ENCODE measurements at regions of chr2 and their contacts with region 1.

Region 1: DNA sequence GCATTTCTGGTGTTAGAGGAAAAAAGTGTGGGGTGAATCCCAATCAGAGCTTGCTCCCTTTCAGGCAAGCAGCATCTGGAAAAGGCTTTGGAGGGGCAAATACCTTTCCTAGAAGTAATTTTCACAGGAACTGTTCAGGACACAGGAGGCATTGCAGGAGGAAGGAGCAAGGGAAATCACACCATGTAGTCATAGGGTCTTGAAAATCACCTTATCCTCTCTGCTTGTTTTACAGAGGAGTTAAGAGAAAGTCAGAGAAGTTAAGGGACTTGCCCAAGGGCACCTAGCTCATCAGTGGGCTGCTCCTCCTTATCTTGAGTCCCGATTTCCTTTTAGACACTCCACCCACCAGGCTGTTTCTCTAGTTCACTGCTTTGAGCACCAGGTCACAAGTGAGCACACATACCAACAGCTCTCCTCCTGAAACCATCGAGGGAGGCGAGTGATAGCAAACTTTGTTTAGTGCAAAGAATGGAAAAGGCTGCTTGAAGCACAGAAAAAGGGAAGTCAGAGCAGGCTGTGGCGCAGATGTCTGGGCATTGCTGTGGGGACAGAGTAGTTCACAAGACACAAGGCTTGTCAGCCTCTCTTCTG is 89.2 kb upstream of the CXCR4 start:
- DNase-seq: peak; percentile 94
- ATAC-seq: peak; percentile 65
- H3K4me3 ChIP-seq: peak overlapping the region in 4 of 5 experiments; percentile 1 to 44 (median 26)
- H3K4me3 Mint-ChIP-seq: peak overlapping the region; percentile 84
- H3K27ac ChIP-seq: peak overlapping the region; percentile 98 to 99
- H3K27ac Mint-ChIP-seq: peak overlapping the region; percentile 99
- H3K4me1 ChIP-seq: peaks cover 70 to 74% of the 10 kb centered on the region in 2 donors
- H3K4me1 Mint-ChIP-seq: peaks cover 77% of the 10 kb centered on the region
- H3K27me3 ChIP-seq: no peaks in the 10 kb centered on the region
- H3K27me3 Mint-ChIP-seq: no peaks in the 10 kb centered on the region
- CTCF ChIP-seq: no peak

Region 2: DNA sequence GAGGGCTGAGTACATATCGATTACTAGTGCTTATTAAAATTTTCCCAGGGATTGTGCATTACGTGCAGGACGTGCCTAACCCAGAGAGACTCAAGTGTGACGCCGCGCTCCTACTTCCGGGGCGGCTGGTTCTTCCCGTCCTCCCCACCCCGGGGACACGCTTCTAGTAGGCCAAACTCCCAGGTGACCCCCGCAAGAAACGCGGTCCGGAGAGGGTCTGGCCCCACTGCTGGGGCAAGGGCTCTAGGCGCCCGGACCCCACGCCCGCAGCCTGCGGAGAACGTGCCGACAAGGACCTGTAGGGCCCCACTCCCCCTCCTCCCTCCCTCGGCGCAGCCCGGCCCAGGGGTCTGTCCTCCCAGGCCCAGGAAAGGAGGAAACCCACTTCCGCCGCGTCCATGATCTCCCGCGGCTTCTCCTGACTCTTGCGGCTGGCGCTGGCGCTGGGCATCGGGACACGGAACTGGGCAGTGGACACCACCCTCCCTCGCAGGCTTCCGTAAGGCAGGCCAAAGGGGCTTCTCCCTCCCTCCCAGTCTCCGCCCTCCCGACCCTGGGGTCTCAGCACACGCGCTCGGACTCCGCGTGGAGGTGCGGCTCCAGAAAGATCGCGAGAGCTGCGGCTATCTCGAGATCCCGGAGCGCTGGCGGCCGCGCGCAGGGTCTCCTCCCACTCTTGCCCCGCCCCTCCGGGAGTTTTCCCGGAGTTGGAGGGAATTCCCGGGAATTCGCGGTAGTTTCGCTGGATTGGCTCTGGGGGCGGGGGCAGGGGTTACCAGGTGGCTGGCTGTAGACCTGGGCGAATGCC is 221.9 kb before region 1 on chr2 and contains the start of gene DARS1:
- CTCF ChIA-PET with region 1: no interaction called
- POLR2A ChIA-PET with region 1: interaction called, 10 read pairs
- intact Hi-C with region 1: loop called (anchors 2 kb)
- DNase-seq: peak; percentile 91
- ATAC-seq: peak; percentile 84
- H3K4me3 ChIP-seq: peak within 1 kb of the TSS; percentile 75 to 99 (median 93)
- H3K4me3 Mint-ChIP-seq: peak within 1 kb of the TSS; percentile 97
- H3K27ac ChIP-seq: peak within 1 kb of the TSS; percentile 94 to 97
- H3K27ac Mint-ChIP-seq: peak within 1 kb of the TSS; percentile 98
- H3K4me1 ChIP-seq: peaks cover 29 to 31% of the 10 kb centered on the region in 2 donors
- H3K4me1 Mint-ChIP-seq: peaks cover 50% of the 10 kb centered on the region
- H3K27me3 ChIP-seq: no peaks in the 10 kb centered on the region
- H3K27me3 Mint-ChIP-seq: no peaks in the 10 kb centered on the region
- CTCF ChIP-seq: no peak
- total RNA-seq, gene DARS1: 88.3 and 92.0 TPM in 2 replicates

Region 3: DNA sequence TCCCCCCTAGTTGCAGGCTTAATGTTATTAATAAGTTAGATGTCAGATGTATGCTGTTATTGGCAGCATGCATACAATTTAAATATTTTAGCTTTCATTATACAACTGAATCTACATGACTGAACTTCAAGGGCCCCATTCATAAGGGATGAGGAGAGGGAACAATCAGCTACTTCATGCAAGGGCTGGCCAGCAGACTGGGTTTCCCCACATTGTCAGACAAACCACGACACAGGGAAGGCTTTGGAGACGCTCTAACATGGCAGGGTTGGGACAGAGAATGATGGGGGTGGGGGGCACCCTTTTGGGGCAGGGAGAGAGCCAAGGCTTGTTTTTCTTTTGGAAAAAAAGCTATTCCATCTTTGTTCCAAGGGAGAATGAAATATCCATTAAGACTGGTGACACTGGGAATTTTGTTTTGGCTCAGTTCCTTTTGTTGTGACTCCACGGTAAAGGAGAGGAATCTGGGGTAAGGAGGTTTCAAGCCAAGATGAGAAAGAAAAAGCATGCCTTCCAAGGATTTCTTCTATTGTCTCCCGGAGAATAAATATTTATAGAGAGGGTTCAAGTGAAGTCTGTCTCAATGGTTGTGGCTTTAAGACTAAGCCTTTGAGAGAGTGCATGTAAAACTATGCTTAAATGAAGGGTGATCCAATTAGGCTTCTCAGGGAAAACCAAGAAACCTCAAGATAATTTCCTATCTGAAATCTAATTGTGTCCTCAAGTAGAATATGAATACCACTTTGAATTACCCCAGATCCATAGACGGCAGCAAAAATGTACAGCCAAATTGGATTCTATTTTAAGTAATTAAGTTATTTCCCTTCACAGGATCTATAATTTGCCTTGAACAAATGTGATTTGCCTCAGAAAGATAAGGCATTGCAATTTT is 94.6 kb before region 1 on chr2:
- CTCF ChIA-PET with region 1: interaction called, 4 read pairs
- POLR2A ChIA-PET with region 1: interaction called, 112 read pairs
- intact Hi-C with region 1: no loop called
- DNase-seq: peak; percentile 48
- ATAC-seq: no peak
- H3K4me3 ChIP-seq: no peak overlapping the region
- H3K4me3 Mint-ChIP-seq: peak overlapping the region; percentile 98
- H3K27ac ChIP-seq: no peak overlapping the region
- H3K27ac Mint-ChIP-seq: peak overlapping the region; percentile 69
- H3K4me1 ChIP-seq: peaks cover 70 to 72% of the 10 kb centered on the region in 2 donors
- H3K4me1 Mint-ChIP-seq: peaks cover 74% of the 10 kb centered on the region
- H3K27me3 ChIP-seq: no peaks in the 10 kb centered on the region
- H3K27me3 Mint-ChIP-seq: no peaks in the 10 kb centered on the region
- CTCF ChIP-seq: no peak

Region 4: DNA sequence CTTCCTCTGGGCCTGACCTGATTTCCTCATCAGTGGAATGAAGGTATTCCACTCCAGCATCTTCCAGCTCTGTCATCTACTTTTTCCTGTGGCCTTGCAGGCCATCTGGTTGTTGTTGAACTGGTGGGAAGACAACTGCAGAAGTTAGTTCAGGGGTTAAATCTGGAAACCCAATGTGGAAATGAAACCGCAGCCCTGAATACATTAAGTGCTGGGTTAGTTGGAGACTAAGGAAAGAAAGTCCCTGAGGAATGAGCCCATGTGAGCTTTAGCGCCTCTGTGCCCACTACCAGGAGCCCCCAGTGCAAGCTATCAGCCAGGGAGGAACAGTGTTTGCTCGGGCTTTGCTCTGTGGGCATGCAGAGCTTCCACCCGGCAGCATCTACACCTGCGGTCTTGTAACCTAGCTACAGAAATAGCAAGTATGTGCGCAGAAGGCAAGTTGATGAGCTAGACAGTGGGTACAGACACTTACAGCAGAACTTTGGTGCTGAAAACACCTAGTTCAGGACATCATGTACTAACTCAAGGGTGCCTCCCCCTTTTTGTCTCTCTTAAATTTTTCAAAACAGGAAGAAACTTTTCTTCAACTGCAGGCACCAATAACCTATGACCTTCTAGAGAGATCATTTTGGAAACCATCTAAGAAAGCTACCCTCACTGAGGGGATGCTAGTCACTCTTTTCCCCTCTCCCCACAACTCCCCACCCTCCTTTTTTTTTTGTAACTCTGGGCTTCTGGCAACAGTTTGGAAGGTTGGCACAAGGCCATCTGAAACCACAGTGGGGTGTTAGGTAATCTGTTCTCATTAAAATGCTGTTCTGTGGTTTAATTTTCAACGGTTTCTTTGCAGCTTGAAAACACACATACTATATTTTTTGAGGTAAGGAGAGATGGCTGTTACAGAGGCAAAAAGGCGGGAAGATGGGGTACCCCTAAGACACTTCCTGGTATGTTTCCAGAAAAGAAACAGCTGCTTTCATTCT is 70.9 kb before region 1 on chr2:
- CTCF ChIA-PET with region 1: interaction called, 55 read pairs
- POLR2A ChIA-PET with region 1: interaction called, 218 read pairs
- intact Hi-C with region 1: loop called (anchors 1 kb)
- DNase-seq: peak; percentile 94
- ATAC-seq: peak; percentile 50
- H3K4me3 ChIP-seq: peak overlapping the region in 3 of 5 experiments; percentile 10 to 33 (median 10)
- H3K4me3 Mint-ChIP-seq: peak overlapping the region; percentile 83
- H3K27ac ChIP-seq: peak overlapping the region; percentile 98 to 99
- H3K27ac Mint-ChIP-seq: peak overlapping the region; percentile 96
- H3K4me1 ChIP-seq: peaks cover 94 to 98% of the 10 kb centered on the region in 2 donors
- H3K4me1 Mint-ChIP-seq: peaks cover 92% of the 10 kb centered on the region
- H3K27me3 ChIP-seq: no peaks in the 10 kb centered on the region
- H3K27me3 Mint-ChIP-seq: no peaks in the 10 kb centered on the region
- CTCF ChIP-seq: no peak

Region 5: DNA sequence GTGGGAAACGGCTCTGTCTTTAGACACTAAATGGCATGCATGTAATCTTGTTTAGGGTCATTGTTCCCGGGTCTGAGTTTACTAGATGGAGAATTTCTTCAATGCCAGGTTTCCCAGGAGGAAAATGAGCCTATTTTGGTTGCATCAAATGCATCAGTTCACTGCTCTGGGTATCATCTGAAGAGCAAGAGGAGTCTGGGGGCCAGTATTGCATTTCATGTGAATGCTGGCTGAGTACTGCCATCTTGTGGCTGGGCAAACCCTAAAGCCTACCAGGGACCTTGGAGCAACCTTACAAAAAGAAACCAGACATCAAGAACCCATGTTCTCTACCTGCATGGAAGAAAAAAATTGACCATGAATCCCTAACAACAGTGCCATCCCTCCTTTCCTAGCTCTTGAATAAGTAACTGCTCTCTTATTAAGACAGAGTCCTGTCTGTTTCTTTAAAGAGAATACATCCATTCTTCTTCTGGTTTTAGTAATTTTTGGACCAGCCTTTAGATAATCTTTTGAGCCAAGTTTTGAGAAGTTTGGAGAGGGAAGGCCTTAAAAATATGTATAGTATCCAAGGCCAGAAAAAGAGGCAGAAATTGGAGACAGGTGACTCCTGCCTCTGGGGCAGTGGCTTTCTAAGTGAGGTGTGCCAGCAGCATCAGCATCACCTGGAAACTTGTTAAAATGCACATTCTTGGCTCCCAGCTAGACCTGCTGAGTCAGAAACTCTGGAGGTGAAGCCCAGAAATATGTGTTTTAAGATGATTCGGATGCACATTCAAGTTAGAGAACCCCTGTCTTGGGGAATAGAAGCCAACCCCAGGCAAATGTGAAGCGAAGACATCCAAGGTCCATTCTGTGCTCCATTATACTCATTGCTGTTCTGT is 171.8 kb after region 1 on chr2:
- CTCF ChIA-PET with region 1: interaction called, 25 read pairs
- POLR2A ChIA-PET with region 1: interaction called, 20 read pairs
- intact Hi-C with region 1: loop called (anchors 1 kb)
- DNase-seq: peak; percentile 90
- ATAC-seq: peak; percentile 29
- H3K4me3 ChIP-seq: peak overlapping the region in 1 of 5 experiments; percentile 8
- H3K4me3 Mint-ChIP-seq: peak overlapping the region; percentile 49
- H3K27ac ChIP-seq: peak overlapping the region in 1 of 2 donors; percentile 71
- H3K27ac Mint-ChIP-seq: peak overlapping the region; percentile 97
- H3K4me1 ChIP-seq: peaks cover 61 to 65% of the 10 kb centered on the region in 2 donors
- H3K4me1 Mint-ChIP-seq: peaks cover 81% of the 10 kb centered on the region
- H3K27me3 ChIP-seq: no peaks in the 10 kb centered on the region
- H3K27me3 Mint-ChIP-seq: no peaks in the 10 kb centered on the region
- CTCF ChIP-seq: peak; percentile 88

Measured in B cell (primary cell).